ENCODE measurements at regions of chr14 and their contacts with region 1.

Region 1: DNA sequence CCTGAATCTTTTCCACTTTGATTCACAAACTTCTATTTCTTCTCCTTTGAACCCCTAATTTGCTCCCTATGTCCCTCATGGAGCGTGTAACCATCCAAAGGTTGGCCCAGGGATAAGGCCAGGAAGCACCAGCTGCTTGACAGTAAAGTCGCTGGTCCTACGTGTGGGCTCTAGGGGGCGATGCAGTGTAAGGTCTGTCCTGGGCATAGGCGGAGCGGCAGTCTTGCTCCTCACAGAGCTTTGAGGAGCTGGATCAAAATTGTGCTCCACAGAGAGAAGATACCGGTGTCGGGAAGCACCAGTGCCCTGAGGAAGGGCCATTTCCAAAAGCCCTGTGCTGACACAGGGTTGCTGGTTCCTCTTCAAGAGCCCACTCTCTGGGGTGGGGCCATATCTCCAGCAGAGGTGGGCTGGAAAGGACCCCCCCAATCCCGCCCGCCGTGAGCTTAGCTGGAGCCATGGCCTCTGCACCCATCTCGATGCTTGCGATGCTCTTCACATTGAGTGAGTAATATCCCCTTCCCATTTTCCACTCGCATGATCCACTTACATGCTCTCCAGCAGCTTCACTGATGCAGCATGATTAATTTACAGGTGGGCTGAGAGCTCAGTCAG is 49.9 kb upstream of the OR4E1 start:
- DNase-seq: no peak
- ATAC-seq: peak; percentile 70
- H3K4me3 ChIP-seq: no peak overlapping the region
- H3K27ac ChIP-seq: no peak overlapping the region
- H3K4me1 ChIP-seq: no peaks in the 10 kb centered on the region
- H3K27me3 ChIP-seq: peaks cover 0 to 3% of the 10 kb centered on the region in 2 experiments; a peak in 1 of 4 replicates
- CTCF ChIP-seq: peak; percentile 31 to 46 (median 44); a peak in 4 of 6 replicates
- EP300 ChIP-seq: no peak
- POLR2A ChIP-seq: no peak
- RAD21 ChIP-seq: 0 out of 2 replicates have a peak, but pooled peaks have one; percentile 6

Region 2: DNA sequence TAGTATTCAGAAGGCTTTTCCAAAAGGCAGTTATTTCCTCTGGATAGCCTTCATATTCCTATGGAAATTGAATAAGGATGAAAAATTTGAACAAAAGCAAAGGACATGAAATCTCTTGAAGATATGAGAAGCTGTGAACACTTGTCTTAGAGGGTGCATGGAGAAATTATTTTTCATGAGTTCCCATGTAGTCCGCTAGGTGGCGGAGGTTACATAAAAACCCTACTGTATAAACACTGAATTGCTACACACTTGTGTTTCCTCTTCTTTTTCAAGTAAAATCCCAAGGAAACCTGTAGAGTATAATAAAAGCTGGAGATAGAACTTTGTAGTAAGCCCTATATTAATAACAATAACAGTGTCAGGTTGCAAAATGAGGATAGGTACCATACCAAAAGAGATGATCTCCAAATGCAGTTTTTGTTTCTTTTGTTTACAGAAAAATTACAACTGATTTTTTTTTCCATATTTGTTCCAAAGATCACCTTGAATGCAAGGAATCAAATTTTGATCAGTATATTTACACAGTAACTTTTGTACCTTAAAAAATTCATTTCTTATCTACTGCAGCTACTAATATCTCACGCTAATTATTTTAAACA is 12.1 kb before region 1 on chr14:
- CTCF ChIA-PET with region 1: interaction called, 18 read pairs
- POLR2A ChIA-PET with region 1: no interaction called
- RAD21 ChIA-PET with region 1: no interaction called
- SMC1A ChIA-PET with region 1: interaction called, 3 read pairs
- in situ Hi-C with region 1: no loop called
- intact Hi-C with region 1: no loop called
- DNase-seq: no peak
- ATAC-seq: peak; percentile 82
- H3K4me3 ChIP-seq: no peak overlapping the region
- H3K27ac ChIP-seq: no peak overlapping the region
- H3K4me1 ChIP-seq: no peaks in the 10 kb centered on the region
- H3K27me3 ChIP-seq: no peaks in the 10 kb centered on the region
- CTCF ChIP-seq: peak; percentile 57 to 78 (median 71)
- EP300 ChIP-seq: no peak
- POLR2A ChIP-seq: no peak
- RAD21 ChIP-seq: peak; percentile 23; the same call in 1 of the 2 replicates

Region 3: GRCh38 chr14:21734457-21735074 is 11.0 kb after region 1 on chr14:
- CTCF ChIA-PET with region 1: interaction called, 11 read pairs
- POLR2A ChIA-PET with region 1: no interaction called
- RAD21 ChIA-PET with region 1: no interaction called
- SMC1A ChIA-PET with region 1: no interaction called
- in situ Hi-C with region 1: no loop called
- intact Hi-C with region 1: no loop called
- DNase-seq: peak; percentile 12
- ATAC-seq: peak; percentile 64
- H3K4me3 ChIP-seq: no peak overlapping the region
- H3K27ac ChIP-seq: no peak overlapping the region
- H3K4me1 ChIP-seq: no peaks in the 10 kb centered on the region
- H3K27me3 ChIP-seq: no peaks in the 10 kb centered on the region
- CTCF ChIP-seq: peak; percentile 54 to 65 (median 58)
- EP300 ChIP-seq: no peak
- POLR2A ChIP-seq: no peak
- RAD21 ChIP-seq: 0 out of 2 replicates have a peak, but pooled peaks have one; percentile 7

Measured in GM12878 (cell line).